Activated CD8-positive, alpha-beta memory T cell treated with anti-CD3 and anti-CD28 coated beads, Interleukin-2, amount 10 ng/mL, durations not matched to agents 7 days and 5 days (primary cell): ENCODE measurements at regions of chr19 and their contacts with region 1.

Region 1: GRCh38 chr19:7680606-7681339 is at the start of gene TRAPPC5:
- DNase-seq: peak; percentile 88
- ATAC-seq: peak; percentile 81
- H3K4me3 Mint-ChIP-seq: peak within 1 kb of the TSS; percentile 83
- H3K27ac Mint-ChIP-seq: peak within 1 kb of the TSS; percentile 88
- H3K4me1 Mint-ChIP-seq: peaks cover 34% of the 10 kb centered on the region
- H3K27me3 Mint-ChIP-seq: peaks cover 22% of the 10 kb centered on the region
- total RNA-seq, gene TRAPPC5: 80.1 to 91.0 TPM

Region 2: GRCh38 chr19:7348587-7349230 is 332.1 kb before region 1 on chr19 and contains the start of gene ARHGEF18:
- CTCF ChIA-PET with region 1: interaction called, 10 read pairs
- DNase-seq: peak; percentile 79
- ATAC-seq: peak; percentile 72
- H3K4me3 Mint-ChIP-seq: peak within 1 kb of the TSS; percentile 94
- H3K27ac Mint-ChIP-seq: peak within 1 kb of the TSS; percentile 93
- H3K4me1 Mint-ChIP-seq: peaks cover 63% of the 10 kb centered on the region
- H3K27me3 Mint-ChIP-seq: no peaks in the 10 kb centered on the region
- total RNA-seq, gene ARHGEF18: 43.6 to 56.4 TPM

Region 3: GRCh38 chr19:7636691-7637373 is 43.9 kb before region 1 on chr19 and contains the start of gene STXBP2:
- CTCF ChIA-PET with region 1: interaction called, 13 read pairs
- DNase-seq: peak; percentile 92
- ATAC-seq: peak; percentile 94
- H3K4me3 Mint-ChIP-seq: peak within 1 kb of the TSS; percentile 79
- H3K27ac Mint-ChIP-seq: peak within 1 kb of the TSS; percentile 88
- H3K4me1 Mint-ChIP-seq: peaks cover 26% of the 10 kb centered on the region
- H3K27me3 Mint-ChIP-seq: no peaks in the 10 kb centered on the region
- total RNA-seq, gene STXBP2: 132 to 158 TPM

Region 4: DNA sequence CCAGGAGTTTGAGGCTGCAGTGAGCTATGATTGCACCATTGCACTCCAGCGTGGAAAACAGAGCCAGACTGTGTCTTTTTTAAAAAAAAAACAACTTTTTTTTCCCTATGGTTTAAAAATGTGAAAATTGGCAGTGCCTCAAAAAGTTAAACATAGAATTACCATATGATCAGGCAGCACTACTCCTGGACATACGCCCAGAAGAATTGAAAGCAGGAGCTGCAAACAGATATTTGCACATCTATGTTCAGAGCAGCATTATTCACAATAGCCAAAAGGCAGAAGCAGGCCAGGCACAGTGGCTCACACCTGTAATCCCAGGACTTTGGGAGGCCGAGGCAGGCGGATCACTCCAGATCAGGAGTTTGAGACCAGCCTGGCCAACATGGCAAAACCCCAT is 15.7 kb before region 1 on chr19:
- CTCF ChIA-PET with region 1: interaction called, 23 read pairs
- DNase-seq: no peak
- ATAC-seq: no peak
- H3K4me3 Mint-ChIP-seq: no peak overlapping the region
- H3K27ac Mint-ChIP-seq: no peak overlapping the region
- H3K4me1 Mint-ChIP-seq: peaks cover 7% of the 10 kb centered on the region
- H3K27me3 Mint-ChIP-seq: peaks cover 7% of the 10 kb centered on the region

Region 5: DNA sequence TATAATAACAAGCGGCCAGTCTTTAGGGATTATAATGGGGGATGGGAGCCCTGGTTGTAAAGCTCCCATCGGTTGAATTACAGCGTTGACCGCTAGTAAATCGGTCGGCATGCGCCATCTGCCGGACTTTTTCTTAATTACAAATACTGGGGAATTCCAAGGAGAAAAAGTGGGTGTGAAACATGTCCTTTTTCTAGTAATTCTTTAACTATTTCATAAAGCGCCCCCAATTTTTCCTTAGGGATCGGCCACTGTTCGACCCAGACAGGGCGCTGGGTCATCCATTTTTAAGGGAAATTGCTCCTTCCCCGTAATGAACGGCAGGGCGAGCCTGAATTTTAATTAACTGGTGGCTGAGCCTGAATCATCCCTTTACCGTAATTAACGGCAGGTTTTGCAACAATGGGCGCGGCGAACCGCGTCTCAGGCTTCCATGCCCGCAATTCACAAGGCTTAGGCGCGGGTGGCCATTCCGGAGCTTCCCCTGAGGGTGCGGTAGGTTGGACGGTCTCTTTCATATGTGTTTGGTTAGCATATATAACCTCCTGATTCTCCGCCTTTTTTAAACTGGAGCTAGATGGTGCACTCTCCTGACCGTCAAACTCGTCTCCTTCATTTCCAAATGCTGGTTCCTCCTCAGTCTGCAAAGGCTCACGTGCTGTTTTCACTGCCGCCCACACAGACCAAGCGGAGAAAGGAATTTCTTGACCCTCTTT is 119.0 kb after region 1 on chr19:
- CTCF ChIA-PET with region 1: interaction called, 36 read pairs
- DNase-seq: peak; percentile 60
- ATAC-seq: no peak
- H3K4me3 Mint-ChIP-seq: no peak overlapping the region
- H3K27ac Mint-ChIP-seq: no peak overlapping the region
- H3K4me1 Mint-ChIP-seq: peaks cover 2% of the 10 kb centered on the region
- H3K27me3 Mint-ChIP-seq: peaks cover 76% of the 10 kb centered on the region

Region 6: DNA sequence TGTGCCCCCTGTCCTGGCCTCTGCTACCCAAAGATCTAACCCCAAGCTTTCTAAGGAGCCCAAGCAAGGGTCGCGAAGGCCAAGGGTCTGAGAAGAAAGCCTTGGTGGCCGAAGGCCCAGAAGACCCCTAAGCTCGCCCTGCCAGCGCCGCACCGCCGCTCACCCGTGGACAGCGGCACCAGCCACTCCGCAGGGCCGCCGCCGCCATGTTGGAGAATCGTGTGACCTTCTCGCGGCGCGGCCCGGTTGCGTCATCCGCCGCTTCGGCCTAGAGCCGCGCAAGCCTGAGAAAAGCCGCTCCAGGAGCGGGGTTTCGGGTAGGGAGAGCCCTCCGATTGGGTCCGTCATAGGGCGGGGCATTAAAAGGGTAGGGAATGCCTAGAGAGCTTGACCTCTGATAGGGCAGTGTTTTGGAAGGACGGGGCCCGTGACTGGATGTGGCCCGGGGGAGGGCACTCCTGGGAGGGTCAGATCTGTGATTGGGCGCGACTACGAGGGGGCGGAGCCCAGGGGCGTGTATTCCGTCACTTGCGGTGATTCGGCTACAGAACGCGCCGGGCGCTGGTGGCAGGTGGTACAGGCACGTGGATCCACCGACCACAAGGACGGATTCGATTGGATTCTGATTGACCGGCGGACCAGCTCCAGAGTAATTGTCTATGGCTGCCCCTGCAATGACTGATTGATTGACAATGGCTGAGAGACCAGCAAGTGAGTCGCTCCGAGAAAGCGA is 262.8 kb after region 1 on chr19 and contains the start of gene TIMM44:
- CTCF ChIA-PET with region 1: interaction called, 11 read pairs
- DNase-seq: peak; percentile 100
- ATAC-seq: peak; percentile 99
- H3K4me3 Mint-ChIP-seq: peak within 1 kb of the TSS; percentile 83
- H3K27ac Mint-ChIP-seq: peak within 1 kb of the TSS; percentile 91
- H3K4me1 Mint-ChIP-seq: peaks cover 33% of the 10 kb centered on the region
- H3K27me3 Mint-ChIP-seq: no peaks in the 10 kb centered on the region
- total RNA-seq, gene TIMM44: 63.7 to 76.4 TPM

Region 7: DNA sequence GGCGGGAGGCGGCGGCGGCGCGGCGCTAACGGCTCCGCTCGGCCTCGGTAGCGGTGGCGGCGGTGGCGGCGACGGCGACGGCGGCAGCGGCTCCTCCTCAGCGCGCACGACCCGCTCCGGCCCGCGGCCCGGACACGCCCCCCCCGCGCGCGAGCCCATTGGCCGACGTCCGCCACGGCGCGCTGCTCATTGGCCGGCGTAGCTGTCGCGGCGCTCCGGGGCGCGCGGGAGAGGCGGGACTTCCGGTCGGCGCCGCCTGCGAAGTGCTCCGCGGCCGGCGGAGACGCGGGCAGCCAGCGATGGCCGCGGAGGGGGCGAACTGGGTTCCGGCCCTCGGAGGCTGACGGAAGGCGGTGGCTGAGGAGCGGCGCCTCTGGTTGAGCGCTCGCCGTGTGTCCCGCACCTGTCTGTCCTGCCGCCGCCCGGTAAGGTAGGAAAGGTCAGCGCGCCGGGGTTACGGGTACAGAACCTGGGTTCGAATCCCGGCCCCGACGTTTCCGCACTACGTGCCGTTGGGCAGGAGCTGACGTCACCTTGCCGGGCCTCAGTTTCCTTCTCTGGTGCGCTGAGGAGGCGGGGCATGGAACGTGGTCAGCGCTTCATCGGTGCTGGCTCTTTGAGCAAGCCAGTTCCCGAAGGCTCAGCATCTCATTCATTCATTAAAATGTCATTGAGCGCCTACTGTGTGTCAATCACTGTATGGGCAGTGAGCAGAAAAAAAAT is 324.9 kb after region 1 on chr19 and contains the start of gene ELAVL1:
- CTCF ChIA-PET with region 1: no interaction called
- DNase-seq: peak; percentile 91
- ATAC-seq: peak; percentile 95
- H3K4me3 Mint-ChIP-seq: peak within 1 kb of the TSS; percentile 93
- H3K27ac Mint-ChIP-seq: peak within 1 kb of the TSS; percentile 87
- H3K4me1 Mint-ChIP-seq: peaks cover 39% of the 10 kb centered on the region
- H3K27me3 Mint-ChIP-seq: no peaks in the 10 kb centered on the region
- total RNA-seq, gene ELAVL1: 119 to 150 TPM